Transverse colon (tissue), 4 donors: ENCODE measurements at regions of chr7 and their contacts with region 1.

Region 1: GRCh38 chr7:45917658-45918057 is 3.4 kb downstream of the IGFBP3 start:
- DNase-seq: peak; percentile 77
- H3K4me3 ChIP-seq: peak overlapping the region in 1 of 4 donors; percentile 24
- H3K27ac ChIP-seq: no peak overlapping the region
- H3K4me1 ChIP-seq: peaks cover 0 to 27% (median 19%) of the 10 kb centered on the region in 4 donors
- H3K27me3 ChIP-seq: peaks cover 52% of the 10 kb centered on the region
- CTCF ChIP-seq: peak; percentile 74 to 96 (median 93)
- EP300 ChIP-seq: no peak
- POLR2A ChIP-seq: no peak

Region 2: DNA sequence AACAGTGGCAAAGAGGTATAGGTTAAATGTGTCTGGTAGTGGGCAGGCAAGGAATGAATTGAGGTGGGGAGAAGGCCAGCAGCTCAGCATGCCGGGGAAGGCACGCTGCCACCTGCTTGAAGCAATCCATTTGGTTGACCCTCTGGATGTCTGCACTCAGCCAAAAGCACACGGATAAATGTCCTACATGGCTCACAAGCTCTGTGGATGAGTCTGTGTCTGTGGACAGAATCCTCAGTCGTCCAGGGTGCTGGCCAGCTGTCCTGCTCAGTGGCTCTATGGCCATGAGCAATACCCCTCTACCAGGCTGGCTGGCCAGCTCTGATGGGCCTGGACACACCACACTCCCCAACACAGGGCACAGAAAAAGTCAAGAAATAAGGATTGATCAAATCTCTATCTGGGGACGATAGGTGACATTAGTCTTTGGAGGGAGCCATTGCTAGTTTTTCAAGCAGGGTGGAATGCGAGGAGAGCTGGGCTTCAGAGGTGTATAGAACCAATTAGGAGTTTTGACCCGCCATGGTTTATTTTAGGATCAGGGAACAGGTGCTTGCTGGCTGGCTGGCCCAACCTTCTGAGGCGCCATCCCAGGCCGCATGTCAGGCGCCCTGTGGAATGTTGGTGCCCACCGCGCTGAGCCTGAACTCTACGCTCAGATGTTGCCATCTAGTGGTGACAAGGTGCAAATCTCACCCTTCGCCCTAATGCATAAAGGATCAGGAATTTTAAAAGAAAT is 1170.8 kb after region 1 on chr7:
- in situ Hi-C with region 1: loop called in 3 of 4 experiments (anchors 10 kb)
- intact Hi-C with region 1: loop called (anchors 2 kb)
- DNase-seq: peak; percentile 27
- H3K4me3 ChIP-seq: no peak overlapping the region
- H3K27ac ChIP-seq: no peak overlapping the region
- H3K4me1 ChIP-seq: peaks cover 0 to 2% (median 0%) of the 10 kb centered on the region in 4 donors
- H3K27me3 ChIP-seq: no peaks in the 10 kb centered on the region
- CTCF ChIP-seq: peak; percentile 85 to 88 (median 86)
- EP300 ChIP-seq: no peak
- POLR2A ChIP-seq: no peak

Region 3: DNA sequence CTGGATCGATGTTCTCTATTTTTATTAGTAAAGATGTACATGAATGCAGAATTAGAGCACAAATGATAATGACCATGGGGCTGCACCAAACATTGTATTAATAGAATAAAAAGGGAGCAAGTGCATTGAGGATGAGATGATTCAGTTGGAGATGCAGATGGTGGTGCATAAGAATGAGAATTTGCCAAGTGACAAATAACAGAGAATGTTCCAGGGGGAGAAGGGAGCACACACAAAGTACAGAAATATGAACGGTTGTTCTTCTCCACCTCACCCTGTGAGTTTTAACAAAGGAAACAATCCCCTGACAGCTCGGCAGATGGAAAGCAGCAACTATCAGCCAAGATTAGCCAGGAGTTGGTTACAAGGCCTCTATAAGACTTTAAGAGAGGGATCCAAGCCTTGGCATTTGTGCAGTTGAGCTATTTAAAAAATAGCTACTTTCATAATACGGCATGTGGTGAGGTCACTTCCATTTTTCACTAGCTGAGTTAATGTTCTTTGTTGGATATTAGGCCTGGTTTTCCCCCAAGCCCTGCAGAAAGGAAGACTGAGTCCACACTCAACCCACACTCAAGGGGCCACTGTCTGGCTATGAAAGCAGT is 1201.7 kb after region 1 on chr7:
- in situ Hi-C with region 1: no loop called
- intact Hi-C with region 1: loop called (anchors 1 kb)
- DNase-seq: no peak
- H3K4me3 ChIP-seq: no peak overlapping the region
- H3K27ac ChIP-seq: peak overlapping the region in 3 of 4 donors; percentile 18 to 41 (median 29)
- H3K4me1 ChIP-seq: no peaks in the 10 kb centered on the region
- H3K27me3 ChIP-seq: no peaks in the 10 kb centered on the region
- CTCF ChIP-seq: no peak
- EP300 ChIP-seq: no peak
- POLR2A ChIP-seq: no peak

Region 4: GRCh38 chr7:47179812-47180515 is 1262.3 kb after region 1 on chr7:
- in situ Hi-C with region 1: loop called (anchors 5 to 25 kb)
- intact Hi-C with region 1: loop called (anchors 1 kb)
- DNase-seq: peak; percentile 51
- H3K4me3 ChIP-seq: no peak overlapping the region
- H3K27ac ChIP-seq: no peak overlapping the region
- H3K4me1 ChIP-seq: peaks cover 5 to 26% (median 8%) of the 10 kb centered on the region in 4 donors
- H3K27me3 ChIP-seq: no peaks in the 10 kb centered on the region
- CTCF ChIP-seq: peak; percentile 75 to 81 (median 78)
- EP300 ChIP-seq: no peak
- POLR2A ChIP-seq: no peak